CD4-positive, alpha-beta T cell (primary cell): ENCODE measurements at regions of chr10 and their contacts with region 1.

Region 1: DNA sequence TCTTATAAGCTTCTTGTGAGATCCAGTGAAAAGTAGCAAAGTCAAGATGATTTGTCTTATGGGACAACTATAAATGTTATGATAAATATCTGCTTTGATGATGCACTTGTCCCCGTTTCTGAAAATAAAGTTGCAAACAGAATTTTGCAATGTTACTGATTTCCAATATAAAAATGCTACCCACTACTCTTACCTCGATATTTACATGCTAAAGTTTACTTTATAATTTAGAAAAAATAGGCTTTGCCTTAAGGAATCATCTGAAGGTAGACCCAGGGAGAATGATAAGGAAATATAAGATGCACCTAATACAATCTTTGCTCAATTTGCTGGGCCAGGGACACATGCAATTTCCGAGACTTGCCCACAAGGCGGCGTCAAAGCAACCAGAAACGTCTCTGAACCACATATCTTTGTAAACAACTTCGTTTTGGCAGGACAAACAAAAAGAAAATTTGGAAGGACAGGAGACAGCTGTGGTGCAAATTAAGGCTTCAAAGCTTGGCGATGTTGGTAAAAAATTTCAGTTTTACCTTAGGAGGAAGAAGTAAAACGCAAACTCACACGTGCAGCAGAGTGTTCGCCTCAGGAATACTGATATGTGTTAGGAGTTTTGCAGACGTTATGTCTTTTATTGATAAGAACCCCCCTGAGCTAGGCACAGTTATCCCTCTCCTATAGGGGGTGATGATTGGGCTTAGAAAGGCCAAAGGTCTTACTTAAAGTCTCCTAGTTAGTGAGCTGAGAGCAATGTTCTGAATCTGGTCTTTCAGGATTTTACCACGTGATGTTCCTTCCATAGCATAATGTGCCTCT is 134.4 kb downstream of the PRKCQ start:
- DNase-seq: peak; percentile 27 to 79 (median 61)
- ATAC-seq: peak; percentile 64
- H3K4me3 ChIP-seq: no peak overlapping the region
- H3K4me3 Mint-ChIP-seq: no peak overlapping the region
- H3K27ac ChIP-seq: no peak overlapping the region
- H3K27ac Mint-ChIP-seq: peak overlapping the region; percentile 68
- H3K4me1 ChIP-seq: peaks cover 11% of the 10 kb centered on the region
- H3K4me1 Mint-ChIP-seq: peaks cover 30% of the 10 kb centered on the region
- H3K27me3 ChIP-seq: no peaks in the 10 kb centered on the region
- H3K27me3 Mint-ChIP-seq: no peaks in the 10 kb centered on the region
- CTCF ChIP-seq: peak; percentile 77

Region 2: GRCh38 chr10:6601246-6601805 is 155.6 kb after region 1 on chr10:
- CTCF ChIA-PET with region 1: interaction called, 7 read pairs
- POLR2A ChIA-PET with region 1: no interaction called
- intact Hi-C with region 1: loop called (anchors 2 to 5 kb)
- DNase-seq: peak in 8 of 14 experiments; percentile 36 to 60 (median 54)
- ATAC-seq: peak; percentile 67
- H3K4me3 ChIP-seq: no peak overlapping the region
- H3K4me3 Mint-ChIP-seq: peak overlapping the region; percentile 71
- H3K27ac ChIP-seq: no peak overlapping the region
- H3K27ac Mint-ChIP-seq: peak overlapping the region; percentile 83
- H3K4me1 ChIP-seq: peaks cover 35% of the 10 kb centered on the region
- H3K4me1 Mint-ChIP-seq: peaks cover 80% of the 10 kb centered on the region
- H3K27me3 ChIP-seq: no peaks in the 10 kb centered on the region
- H3K27me3 Mint-ChIP-seq: no peaks in the 10 kb centered on the region
- CTCF ChIP-seq: peak; percentile 79

Region 3: GRCh38 chr10:6647811-6648526 is 202.3 kb after region 1 on chr10:
- CTCF ChIA-PET with region 1: interaction called, 8 read pairs
- POLR2A ChIA-PET with region 1: no interaction called
- intact Hi-C with region 1: loop called (anchors 1 to 2 kb)
- DNase-seq: peak; percentile 41 to 82 (median 60)
- ATAC-seq: peak; percentile 97
- H3K4me3 ChIP-seq: no peak overlapping the region
- H3K4me3 Mint-ChIP-seq: no peak overlapping the region
- H3K27ac ChIP-seq: no peak overlapping the region
- H3K27ac Mint-ChIP-seq: no peak overlapping the region
- H3K4me1 ChIP-seq: peaks cover 16% of the 10 kb centered on the region
- H3K4me1 Mint-ChIP-seq: peaks cover 17% of the 10 kb centered on the region
- H3K27me3 ChIP-seq: no peaks in the 10 kb centered on the region
- H3K27me3 Mint-ChIP-seq: no peaks in the 10 kb centered on the region
- CTCF ChIP-seq: peak; percentile 93

Region 4: GRCh38 chr10:7722927-7723529 is 1277.3 kb after region 1 on chr10:
- CTCF ChIA-PET with region 1: no interaction called
- POLR2A ChIA-PET with region 1: no interaction called
- intact Hi-C with region 1: no loop called
- DNase-seq: no peak
- ATAC-seq: no peak
- H3K4me3 ChIP-seq: no peak overlapping the region
- H3K4me3 Mint-ChIP-seq: no peak overlapping the region
- H3K27ac ChIP-seq: no peak overlapping the region
- H3K27ac Mint-ChIP-seq: no peak overlapping the region
- H3K4me1 ChIP-seq: no peaks in the 10 kb centered on the region
- H3K4me1 Mint-ChIP-seq: no peaks in the 10 kb centered on the region
- H3K27me3 ChIP-seq: peaks cover 0 to 3% of the 10 kb centered on the region in 2 experiments
- H3K27me3 Mint-ChIP-seq: peaks cover 14% of the 10 kb centered on the region
- CTCF ChIP-seq: no peak